Posterior vena cava (tissue), 2 donors: ENCODE measurements at regions of chr21 and their contacts with region 1.

Region 1: DNA sequence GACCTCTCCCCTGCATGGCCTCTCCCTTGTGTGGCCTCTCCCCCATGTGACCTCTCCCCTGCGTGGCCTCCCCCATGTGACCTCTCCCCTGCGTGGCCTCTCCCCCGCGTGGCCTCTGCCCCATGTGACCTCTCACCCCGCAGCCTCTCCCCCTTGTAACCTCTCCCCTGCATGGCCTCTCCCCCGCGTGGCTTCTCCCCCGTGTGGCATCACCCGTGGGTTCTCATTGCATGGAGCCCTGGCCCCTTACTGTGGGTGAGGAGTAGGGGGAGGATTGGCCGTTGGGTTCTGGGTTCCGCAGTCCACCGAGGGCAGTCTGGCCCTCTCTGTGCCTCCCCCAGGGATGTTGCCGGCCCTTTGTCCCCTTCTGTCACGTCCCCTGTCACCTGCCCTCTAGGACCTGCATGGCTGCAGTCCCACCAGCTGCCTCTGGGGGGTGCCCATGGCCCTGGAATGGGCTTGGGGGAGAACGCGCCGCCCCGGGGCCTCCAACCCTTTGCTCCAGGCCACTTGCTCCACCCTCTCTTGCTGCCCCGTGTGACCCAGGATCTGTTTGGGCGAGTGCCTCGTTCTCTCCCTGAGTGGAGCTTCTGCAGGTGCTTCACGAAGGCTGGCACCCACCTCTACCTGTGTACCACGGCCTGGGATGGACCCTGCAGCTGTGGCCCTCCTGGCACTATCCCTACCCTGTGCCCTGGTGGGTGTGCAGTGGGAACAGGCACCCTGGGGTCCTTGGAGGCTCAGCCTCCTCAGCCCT is 21.3 kb downstream of the RRP1 start:
- DNase-seq: peak; percentile 96

Region 2: GRCh38 chr21:43659136-43660000 is 151.3 kb before region 1 on chr21 and contains the starts of genes HSF2BP and RRP1B:
- intact Hi-C with region 1: no loop called
- DNase-seq: peak; percentile 95
- total RNA-seq, gene HSF2BP: 0.46 to 0.48 TPM
- total RNA-seq, gene RRP1B: 14.6 to 15.2 TPM

Region 3: GRCh38 chr21:43916691-43917514 is 106.2 kb after region 1 on chr21:
- intact Hi-C with region 1: loop called in 1 of 2 experiments (anchors 10 kb)
- DNase-seq: peak; percentile 74